GM18951 (cell line): ENCODE measurements at regions of chr13 and their contacts with region 1.

Region 1: GRCh38 chr13:21638319-21639282 is 32.3 kb upstream of the FGF9 start:
- POLR2A ChIP-seq: no peak

Region 2: GRCh38 chr13:21371011-21371410 is 267.6 kb before region 1 on chr13:
- in situ Hi-C with region 1: no loop called
- POLR2A ChIP-seq: no peak

Region 3: GRCh38 chr13:22061351-22061805 is 422.8 kb after region 1 on chr13:
- in situ Hi-C with region 1: no loop called
- POLR2A ChIP-seq: no peak

Region 4: DNA sequence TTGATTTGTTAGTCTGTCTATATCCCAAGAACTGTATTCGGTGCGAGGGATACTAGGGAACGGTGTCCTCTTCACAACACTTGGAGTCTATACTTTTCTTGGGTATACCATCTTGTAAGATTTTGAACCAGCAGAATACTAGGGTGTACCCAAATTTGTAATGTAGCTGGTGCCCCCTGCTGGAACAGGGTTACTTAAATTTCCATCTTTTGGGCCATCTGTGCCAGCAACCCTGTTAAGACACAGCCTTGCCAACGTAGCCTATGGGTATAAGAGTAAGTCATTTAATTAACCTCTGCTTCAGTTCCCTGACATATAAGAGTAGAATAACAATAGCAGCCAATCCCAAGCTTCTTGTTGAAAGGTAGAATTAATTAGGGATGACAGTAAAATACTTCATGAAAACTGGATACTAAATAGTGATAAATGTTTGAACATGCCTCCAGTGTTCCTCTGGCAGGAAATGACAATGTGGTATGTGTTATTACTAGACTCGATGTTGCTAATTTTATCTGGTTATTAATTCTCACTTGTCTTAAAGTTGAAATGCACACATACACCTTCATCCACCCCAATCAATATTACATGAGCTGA is 639.8 kb after region 1 on chr13:
- in situ Hi-C with region 1: loop called (anchors 10 kb)
- POLR2A ChIP-seq: no peak

Region 5: GRCh38 chr13:22793598-22794134 is 1155.1 kb after region 1 on chr13:
- in situ Hi-C with region 1: loop called (anchors 25 kb)
- POLR2A ChIP-seq: no peak